Right ventricle myocardium inferior (tissue), 1 donor: ENCODE measurements at regions of chr11 and their contacts with region 1.

Region 1: GRCh38 chr11:125170510-125171031 is 6.0 kb downstream of the PKNOX2 start:
- DNase-seq: peak; percentile 76
- ATAC-seq: peak; percentile 83

Region 2: GRCh38 chr11:125214571-125215565 is 44.3 kb after region 1 on chr11:
- intact Hi-C with region 1: loop called (anchors 5 kb)
- DNase-seq: no peak
- ATAC-seq: peak; percentile 78